Activated CD8-positive, alpha-beta T cell treated with anti-CD3 and anti-CD28 coated beads for 36 hours (primary cell): ENCODE measurements at regions of chr1 and their contacts with region 1.

Region 1: DNA sequence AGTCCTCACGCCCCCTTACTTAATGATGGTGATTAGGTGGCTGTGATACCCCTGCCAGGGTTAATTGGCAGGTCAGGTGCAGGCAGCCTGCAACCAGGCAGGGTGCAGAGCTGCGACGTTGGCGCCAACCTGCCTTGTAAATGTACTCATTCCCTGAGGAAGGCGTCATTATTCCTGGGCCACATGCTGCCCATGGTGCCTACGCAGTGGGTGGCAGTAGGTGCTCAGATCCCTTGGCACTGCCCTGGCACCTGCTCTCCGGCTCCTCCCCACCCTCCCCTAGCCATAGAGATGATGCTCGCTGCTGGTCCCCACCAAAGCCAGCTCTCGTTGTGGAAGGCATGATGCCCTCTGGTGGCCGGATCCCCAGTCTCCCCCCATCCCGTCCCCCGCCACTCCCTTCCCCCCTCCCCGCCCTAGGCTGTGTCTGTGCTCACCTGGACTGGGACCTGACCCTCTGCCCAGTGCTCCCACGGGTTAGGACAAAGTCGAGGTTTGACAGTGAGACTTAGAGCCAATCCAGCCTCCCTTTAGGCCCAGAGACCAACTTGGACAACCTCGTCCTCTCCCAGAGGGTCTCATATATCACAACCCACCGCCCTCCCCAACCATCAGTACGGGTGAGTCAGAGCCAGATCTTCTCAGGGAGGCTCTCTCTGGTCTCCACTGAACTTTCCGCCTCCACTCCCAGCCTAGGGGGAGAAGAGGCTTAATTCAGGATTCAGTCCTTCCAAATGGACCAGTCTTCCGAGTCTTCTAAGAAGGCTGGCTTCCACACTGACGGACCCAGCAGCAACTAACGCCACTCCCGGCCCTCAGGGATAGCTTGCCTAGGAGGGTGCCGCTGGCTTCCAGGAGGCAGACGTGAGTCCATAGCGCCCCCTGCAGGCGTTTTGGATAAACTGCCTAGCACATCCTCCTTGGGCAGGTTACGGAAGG is 5.7 kb downstream of the KRTCAP2 start:
- DNase-seq: peak; percentile 94
- ATAC-seq: peak; percentile 82
- H3K4me3 Mint-ChIP-seq: peak overlapping the region; percentile 50
- H3K27ac Mint-ChIP-seq: no peak overlapping the region
- H3K4me1 Mint-ChIP-seq: peaks cover 25% of the 10 kb centered on the region
- H3K27me3 Mint-ChIP-seq: no peaks in the 10 kb centered on the region
- CTCF ChIP-seq: peak; percentile 90

Region 2: GRCh38 chr1:154714052-154714623 is 453.3 kb before region 1 on chr1:
- CTCF ChIA-PET with region 1: no interaction called
- POLR2A ChIA-PET with region 1: no interaction called
- intact Hi-C with region 1: no loop called
- DNase-seq: no peak
- ATAC-seq: peak; percentile 27
- H3K4me3 Mint-ChIP-seq: no peak overlapping the region
- H3K27ac Mint-ChIP-seq: no peak overlapping the region
- H3K4me1 Mint-ChIP-seq: peaks cover 7% of the 10 kb centered on the region
- H3K27me3 Mint-ChIP-seq: no peaks in the 10 kb centered on the region
- CTCF ChIP-seq: no peak

Region 3: GRCh38 chr1:155099331-155099730 is 68.1 kb before region 1 on chr1:
- CTCF ChIA-PET with region 1: interaction called, 21 read pairs
- POLR2A ChIA-PET with region 1: interaction called, 4 read pairs
- intact Hi-C with region 1: loop called (anchors 2 kb)
- DNase-seq: no peak
- ATAC-seq: no peak
- H3K4me3 Mint-ChIP-seq: no peak overlapping the region
- H3K27ac Mint-ChIP-seq: no peak overlapping the region
- H3K4me1 Mint-ChIP-seq: no peaks in the 10 kb centered on the region
- H3K27me3 Mint-ChIP-seq: peaks cover 12% of the 10 kb centered on the region
- CTCF ChIP-seq: no peak

Region 4: GRCh38 chr1:155117617-155118016 is 49.8 kb before region 1 on chr1:
- CTCF ChIA-PET with region 1: interaction called, 14 read pairs
- POLR2A ChIA-PET with region 1: no interaction called
- intact Hi-C with region 1: no loop called
- DNase-seq: no peak
- ATAC-seq: no peak
- H3K4me3 Mint-ChIP-seq: no peak overlapping the region
- H3K27ac Mint-ChIP-seq: no peak overlapping the region
- H3K4me1 Mint-ChIP-seq: no peaks in the 10 kb centered on the region
- H3K27me3 Mint-ChIP-seq: peaks cover 3% of the 10 kb centered on the region
- CTCF ChIP-seq: no peak

Region 5: DNA sequence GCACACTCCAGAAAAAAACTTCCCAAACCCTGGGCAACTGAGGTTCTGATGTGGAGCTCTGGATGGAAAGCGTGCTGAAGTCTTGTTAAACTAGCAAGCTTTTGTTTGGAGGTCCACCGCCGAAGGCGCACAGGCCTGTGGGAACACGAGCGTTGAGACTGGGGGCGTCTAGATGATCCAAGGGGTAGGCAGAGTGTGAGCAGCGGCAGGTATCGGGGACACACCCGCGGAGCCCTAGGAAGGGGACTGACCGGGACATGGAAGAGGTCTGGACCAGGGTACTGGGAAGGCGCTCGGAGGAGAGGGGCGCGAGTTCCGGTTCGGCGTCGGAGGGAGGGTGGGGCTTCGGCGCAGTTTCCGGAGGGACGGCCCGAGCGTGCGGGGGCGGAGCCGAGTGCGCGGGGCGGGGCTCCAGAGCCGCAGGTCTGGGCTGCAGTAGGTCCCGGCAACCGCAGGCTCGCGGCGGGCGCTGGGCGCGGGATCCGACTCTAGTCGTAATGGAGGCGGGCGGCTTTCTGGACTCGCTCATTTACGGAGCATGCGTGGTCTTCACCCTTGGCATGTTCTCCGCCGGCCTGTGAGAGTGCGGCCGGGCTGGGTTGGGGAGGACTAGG is 31.9 kb before region 1 on chr1 and contains the start of gene SLC50A1:
- CTCF ChIA-PET with region 1: interaction called, 69 read pairs
- POLR2A ChIA-PET with region 1: interaction called, 4 read pairs
- intact Hi-C with region 1: no loop called
- DNase-seq: peak; percentile 96
- ATAC-seq: peak; percentile 80
- H3K4me3 Mint-ChIP-seq: peak within 1 kb of the TSS; percentile 99
- H3K27ac Mint-ChIP-seq: peak within 1 kb of the TSS; percentile 99
- H3K4me1 Mint-ChIP-seq: peaks cover 33% of the 10 kb centered on the region
- H3K27me3 Mint-ChIP-seq: no peaks in the 10 kb centered on the region
- CTCF ChIP-seq: no peak
- total RNA-seq, gene SLC50A1: 59.7 to 64.0 TPM

Region 6: GRCh38 chr1:155193275-155193990 is 26.0 kb after region 1 on chr1:
- CTCF ChIA-PET with region 1: interaction called, 175 read pairs
- POLR2A ChIA-PET with region 1: interaction called, 57 read pairs
- intact Hi-C with region 1: no loop called
- DNase-seq: peak; percentile 84
- ATAC-seq: peak; percentile 62
- H3K4me3 Mint-ChIP-seq: peak overlapping the region; percentile 90
- H3K27ac Mint-ChIP-seq: peak overlapping the region; percentile 99
- H3K4me1 Mint-ChIP-seq: peaks cover 28% of the 10 kb centered on the region
- H3K27me3 Mint-ChIP-seq: no peaks in the 10 kb centered on the region
- CTCF ChIP-seq: peak; percentile 98

Region 7: GRCh38 chr1:155309423-155310021 is 142.1 kb after region 1 on chr1:
- CTCF ChIA-PET with region 1: no interaction called
- POLR2A ChIA-PET with region 1: no interaction called
- intact Hi-C with region 1: no loop called
- DNase-seq: no peak
- ATAC-seq: no peak
- H3K4me3 Mint-ChIP-seq: peak overlapping the region; percentile 92
- H3K27ac Mint-ChIP-seq: peak overlapping the region; percentile 99
- H3K4me1 Mint-ChIP-seq: peaks cover 29% of the 10 kb centered on the region
- H3K27me3 Mint-ChIP-seq: no peaks in the 10 kb centered on the region
- CTCF ChIP-seq: no peak